ENCODE measurements at regions of chr14 and their contacts with region 1.

Region 1: DNA sequence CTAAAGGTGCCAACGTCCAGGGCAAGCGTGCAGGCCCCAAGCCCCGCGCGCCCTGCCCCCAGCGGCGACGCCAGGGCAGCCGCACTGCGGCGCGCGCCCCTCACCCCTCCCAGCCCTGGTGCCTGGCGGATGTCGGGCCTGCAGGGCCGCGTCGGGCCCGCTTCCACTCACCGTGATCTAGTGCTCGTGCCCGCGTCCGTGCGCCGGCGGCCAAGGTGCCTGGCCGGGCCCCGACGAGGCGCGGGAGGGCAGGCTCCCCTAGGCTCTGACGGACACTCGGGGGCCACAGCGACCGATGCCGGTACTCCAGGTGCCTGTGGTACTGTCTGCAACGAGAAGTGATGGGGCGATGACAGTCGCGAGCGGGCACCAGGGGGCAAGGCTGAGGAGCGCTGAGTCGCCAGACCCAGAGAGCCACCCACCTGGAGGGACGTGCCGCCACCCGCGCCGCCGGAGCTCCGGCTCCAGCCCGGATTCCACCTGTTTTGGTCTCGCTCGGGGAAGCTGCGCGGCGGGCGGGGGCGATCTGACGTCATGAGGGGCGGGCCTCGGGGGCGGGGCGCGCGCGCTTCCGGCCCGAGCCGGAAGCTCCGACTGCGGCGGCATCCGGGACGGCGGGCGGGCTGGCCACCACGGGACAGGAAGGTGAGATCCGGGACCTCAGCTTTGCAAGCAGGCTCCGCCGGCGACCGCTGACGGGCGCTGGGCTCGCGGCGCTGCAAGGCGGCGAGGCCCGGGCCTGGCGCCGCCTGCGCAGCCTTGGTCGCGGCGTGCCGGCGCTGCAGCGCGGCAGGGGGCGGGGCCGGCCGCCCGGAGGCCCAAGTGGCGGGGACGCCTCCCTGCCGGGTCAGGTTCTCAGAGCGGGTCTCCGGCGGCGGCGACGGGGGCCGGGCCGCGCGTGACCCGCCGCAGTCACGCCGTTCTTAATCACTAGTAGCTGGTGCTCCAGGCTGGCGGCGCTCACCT is at the starts of genes LYSET and MOAP1:
- DNase-seq: peak; percentile 83 to 98 (median 91)
- ATAC-seq: peak; percentile 84
- H3K4me3 ChIP-seq: peak within 1 kb of the TSS; percentile 89
- H3K4me3 Mint-ChIP-seq: peak within 1 kb of the TSS; percentile 98
- H3K27ac ChIP-seq: peak within 1 kb of the TSS; percentile 96 to 97
- H3K27ac Mint-ChIP-seq: peak within 1 kb of the TSS; percentile 98
- H3K4me1 ChIP-seq: peaks cover 31% of the 10 kb centered on the region
- H3K4me1 Mint-ChIP-seq: peaks cover 56% of the 10 kb centered on the region
- H3K27me3 ChIP-seq: no peaks in the 10 kb centered on the region
- H3K27me3 Mint-ChIP-seq: no peaks in the 10 kb centered on the region
- CTCF ChIP-seq: peak; percentile 29
- total RNA-seq, gene LYSET: 5.8 TPM
- total RNA-seq, gene MOAP1: 127 to 130 TPM

Region 2: GRCh38 chr14:92866181-92866752 is 318.4 kb before region 1 on chr14:
- CTCF ChIA-PET with region 1: no interaction called
- POLR2A ChIA-PET with region 1: no interaction called
- intact Hi-C with region 1: no loop called
- DNase-seq: no peak
- ATAC-seq: no peak
- H3K4me3 ChIP-seq: no peak overlapping the region
- H3K4me3 Mint-ChIP-seq: no peak overlapping the region
- H3K27ac ChIP-seq: no peak overlapping the region
- H3K27ac Mint-ChIP-seq: no peak overlapping the region
- H3K4me1 ChIP-seq: no peaks in the 10 kb centered on the region
- H3K4me1 Mint-ChIP-seq: no peaks in the 10 kb centered on the region
- H3K27me3 ChIP-seq: no peaks in the 10 kb centered on the region
- H3K27me3 Mint-ChIP-seq: peaks cover 24% of the 10 kb centered on the region
- CTCF ChIP-seq: no peak

Region 3: GRCh38 chr14:93086441-93087055 is 98.1 kb before region 1 on chr14:
- CTCF ChIA-PET with region 1: no interaction called
- POLR2A ChIA-PET with region 1: no interaction called
- intact Hi-C with region 1: no loop called
- DNase-seq: no peak
- ATAC-seq: no peak
- H3K4me3 ChIP-seq: no peak overlapping the region
- H3K4me3 Mint-ChIP-seq: no peak overlapping the region
- H3K27ac ChIP-seq: no peak overlapping the region
- H3K27ac Mint-ChIP-seq: no peak overlapping the region
- H3K4me1 ChIP-seq: peaks cover 21% of the 10 kb centered on the region
- H3K4me1 Mint-ChIP-seq: peaks cover 18% of the 10 kb centered on the region
- H3K27me3 ChIP-seq: no peaks in the 10 kb centered on the region
- H3K27me3 Mint-ChIP-seq: no peaks in the 10 kb centered on the region
- CTCF ChIP-seq: no peak

Region 4: GRCh38 chr14:93137864-93138263 is 46.8 kb before region 1 on chr14:
- CTCF ChIA-PET with region 1: interaction called, 5 read pairs
- POLR2A ChIA-PET with region 1: interaction called, 4 read pairs
- intact Hi-C with region 1: loop called in 1 of 2 experiments (anchors 2 kb)
- DNase-seq: no peak
- ATAC-seq: no peak
- H3K4me3 ChIP-seq: no peak overlapping the region
- H3K4me3 Mint-ChIP-seq: no peak overlapping the region
- H3K27ac ChIP-seq: no peak overlapping the region
- H3K27ac Mint-ChIP-seq: no peak overlapping the region
- H3K4me1 ChIP-seq: no peaks in the 10 kb centered on the region
- H3K4me1 Mint-ChIP-seq: peaks cover 6% of the 10 kb centered on the region
- H3K27me3 ChIP-seq: no peaks in the 10 kb centered on the region
- H3K27me3 Mint-ChIP-seq: no peaks in the 10 kb centered on the region
- CTCF ChIP-seq: no peak

Region 5: DNA sequence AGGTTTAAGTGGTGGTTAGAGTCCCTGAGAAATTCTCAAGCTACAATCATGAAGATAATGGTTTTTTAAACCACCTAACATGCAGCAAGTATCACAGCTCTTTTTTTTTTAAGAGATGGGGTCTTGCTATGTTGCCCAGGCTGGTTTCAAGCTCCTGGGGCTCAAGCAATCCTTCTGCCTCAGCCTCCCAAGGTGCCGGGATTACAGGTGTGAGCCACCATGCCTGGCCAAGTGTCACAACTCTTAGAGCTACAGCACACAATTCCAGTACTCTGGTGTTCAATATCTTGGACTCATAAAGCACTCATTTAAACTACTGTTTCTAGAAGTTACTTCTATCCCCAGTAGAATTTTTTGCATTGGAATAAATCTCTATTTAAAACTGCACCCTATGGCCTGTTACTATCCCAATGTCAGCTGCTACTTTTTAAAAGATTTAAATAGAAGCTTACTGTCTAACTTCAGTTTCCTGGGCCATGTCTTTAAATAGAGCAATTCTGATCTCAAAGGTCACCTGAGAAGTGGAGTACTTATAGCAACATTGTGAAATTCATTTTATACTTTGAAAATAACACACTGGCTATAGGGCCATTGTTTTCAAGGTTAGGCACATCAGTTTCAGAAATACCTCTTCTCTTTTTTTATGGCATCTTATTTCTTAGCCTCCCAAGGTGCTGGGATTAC is 10.8 kb after region 1 on chr14:
- CTCF ChIA-PET with region 1: interaction called, 6 read pairs
- POLR2A ChIA-PET with region 1: interaction called, 13 read pairs
- intact Hi-C with region 1: no loop called
- DNase-seq: no peak
- ATAC-seq: no peak
- H3K4me3 ChIP-seq: no peak overlapping the region
- H3K4me3 Mint-ChIP-seq: no peak overlapping the region
- H3K27ac ChIP-seq: no peak overlapping the region
- H3K27ac Mint-ChIP-seq: no peak overlapping the region
- H3K4me1 ChIP-seq: no peaks in the 10 kb centered on the region
- H3K4me1 Mint-ChIP-seq: peaks cover 7% of the 10 kb centered on the region
- H3K27me3 ChIP-seq: no peaks in the 10 kb centered on the region
- H3K27me3 Mint-ChIP-seq: no peaks in the 10 kb centered on the region
- CTCF ChIP-seq: no peak

Region 6: DNA sequence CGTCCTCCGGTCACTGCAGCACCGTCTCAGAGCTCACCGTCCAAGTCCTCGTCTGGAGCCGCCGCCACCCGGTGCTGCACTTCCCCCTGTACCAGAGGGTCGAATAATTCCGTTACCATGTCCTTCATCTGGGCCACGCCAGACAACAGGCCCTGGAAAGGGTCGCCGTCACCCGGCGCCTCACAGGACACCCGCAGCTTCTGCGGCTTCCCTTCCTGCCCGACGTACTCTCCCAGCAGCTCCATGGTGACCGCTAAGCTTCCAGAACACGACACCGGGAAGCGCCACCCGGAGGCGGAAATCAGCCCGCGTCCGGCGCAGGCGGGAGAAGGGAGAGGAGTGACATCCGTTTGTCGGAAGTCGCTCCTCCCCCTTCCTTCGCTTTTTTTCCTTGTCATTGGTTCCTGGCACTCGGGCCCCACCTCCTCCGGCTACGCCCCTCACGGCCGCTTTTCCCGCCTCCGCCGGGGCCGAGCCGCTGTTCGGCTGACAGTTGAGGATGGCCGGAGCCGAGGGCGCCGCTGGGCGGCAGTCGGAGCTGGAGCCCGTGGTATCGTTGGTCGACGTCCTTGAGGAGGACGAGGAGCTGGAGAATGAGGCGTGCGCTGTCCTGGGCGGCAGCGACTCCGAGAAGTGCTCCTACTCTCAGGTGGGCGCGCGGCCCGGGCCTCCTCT is 22.3 kb after region 1 on chr14 and contains the starts of genes GON7 and UBR7:
- CTCF ChIA-PET with region 1: interaction called, 37 read pairs
- POLR2A ChIA-PET with region 1: interaction called, 101 read pairs
- intact Hi-C with region 1: loop called (anchors 1 kb)
- DNase-seq: peak; percentile 68 to 95 (median 82)
- ATAC-seq: peak; percentile 97
- H3K4me3 ChIP-seq: peak within 1 kb of the TSS; percentile 93
- H3K4me3 Mint-ChIP-seq: peak within 1 kb of the TSS; percentile 97
- H3K27ac ChIP-seq: peak within 1 kb of the TSS; percentile 56 to 75
- H3K27ac Mint-ChIP-seq: peak within 1 kb of the TSS; percentile 95
- H3K4me1 ChIP-seq: peaks cover 32% of the 10 kb centered on the region
- H3K4me1 Mint-ChIP-seq: peaks cover 52% of the 10 kb centered on the region
- H3K27me3 ChIP-seq: no peaks in the 10 kb centered on the region
- H3K27me3 Mint-ChIP-seq: no peaks in the 10 kb centered on the region
- CTCF ChIP-seq: peak; percentile 21
- total RNA-seq, gene GON7: 2.3 to 2.4 TPM
- total RNA-seq, gene UBR7: 6.8 to 7.4 TPM

Region 7: GRCh38 chr14:93219103-93219726 is 34.5 kb after region 1 on chr14:
- CTCF ChIA-PET with region 1: interaction called, 11 read pairs
- POLR2A ChIA-PET with region 1: interaction called, 5 read pairs
- intact Hi-C with region 1: loop called in 1 of 2 experiments (anchors 5 kb)
- DNase-seq: peak in 13 of 14 experiments; percentile 17 to 82 (median 37)
- ATAC-seq: peak; percentile 93
- H3K4me3 ChIP-seq: no peak overlapping the region
- H3K4me3 Mint-ChIP-seq: no peak overlapping the region
- H3K27ac ChIP-seq: no peak overlapping the region
- H3K27ac Mint-ChIP-seq: no peak overlapping the region
- H3K4me1 ChIP-seq: no peaks in the 10 kb centered on the region
- H3K4me1 Mint-ChIP-seq: no peaks in the 10 kb centered on the region
- H3K27me3 ChIP-seq: no peaks in the 10 kb centered on the region
- H3K27me3 Mint-ChIP-seq: no peaks in the 10 kb centered on the region
- CTCF ChIP-seq: peak; percentile 79

Region 8: GRCh38 chr14:93332853-93333630 is 148.4 kb after region 1 on chr14 and contains the start of gene BTBD7:
- CTCF ChIA-PET with region 1: no interaction called
- POLR2A ChIA-PET with region 1: interaction called, 6 read pairs
- intact Hi-C with region 1: loop called in 1 of 2 experiments (anchors 5 kb)
- DNase-seq: peak; percentile 88 to 99 (median 92)
- ATAC-seq: peak; percentile 94
- H3K4me3 ChIP-seq: peak within 1 kb of the TSS; percentile 80
- H3K4me3 Mint-ChIP-seq: peak within 1 kb of the TSS; percentile 97
- H3K27ac ChIP-seq: peak within 1 kb of the TSS; percentile 52 to 73
- H3K27ac Mint-ChIP-seq: peak within 1 kb of the TSS; percentile 92
- H3K4me1 ChIP-seq: peaks cover 20% of the 10 kb centered on the region
- H3K4me1 Mint-ChIP-seq: peaks cover 58% of the 10 kb centered on the region
- H3K27me3 ChIP-seq: no peaks in the 10 kb centered on the region
- H3K27me3 Mint-ChIP-seq: no peaks in the 10 kb centered on the region
- CTCF ChIP-seq: no peak
- total RNA-seq, gene BTBD7: 12.5 to 12.6 TPM

Measured in CD4-positive, alpha-beta T cell (primary cell).